ENCODE measurements at regions of chr11 and their contacts with region 1.

Region 1: GRCh38 chr11:10307442-10308207 is 2.8 kb downstream of the ADM start:
- DNase-seq: no peak
- H3K4me3 ChIP-seq: peak overlapping the region; percentile 100
- CTCF ChIP-seq: peak; percentile 83

Region 2: DNA sequence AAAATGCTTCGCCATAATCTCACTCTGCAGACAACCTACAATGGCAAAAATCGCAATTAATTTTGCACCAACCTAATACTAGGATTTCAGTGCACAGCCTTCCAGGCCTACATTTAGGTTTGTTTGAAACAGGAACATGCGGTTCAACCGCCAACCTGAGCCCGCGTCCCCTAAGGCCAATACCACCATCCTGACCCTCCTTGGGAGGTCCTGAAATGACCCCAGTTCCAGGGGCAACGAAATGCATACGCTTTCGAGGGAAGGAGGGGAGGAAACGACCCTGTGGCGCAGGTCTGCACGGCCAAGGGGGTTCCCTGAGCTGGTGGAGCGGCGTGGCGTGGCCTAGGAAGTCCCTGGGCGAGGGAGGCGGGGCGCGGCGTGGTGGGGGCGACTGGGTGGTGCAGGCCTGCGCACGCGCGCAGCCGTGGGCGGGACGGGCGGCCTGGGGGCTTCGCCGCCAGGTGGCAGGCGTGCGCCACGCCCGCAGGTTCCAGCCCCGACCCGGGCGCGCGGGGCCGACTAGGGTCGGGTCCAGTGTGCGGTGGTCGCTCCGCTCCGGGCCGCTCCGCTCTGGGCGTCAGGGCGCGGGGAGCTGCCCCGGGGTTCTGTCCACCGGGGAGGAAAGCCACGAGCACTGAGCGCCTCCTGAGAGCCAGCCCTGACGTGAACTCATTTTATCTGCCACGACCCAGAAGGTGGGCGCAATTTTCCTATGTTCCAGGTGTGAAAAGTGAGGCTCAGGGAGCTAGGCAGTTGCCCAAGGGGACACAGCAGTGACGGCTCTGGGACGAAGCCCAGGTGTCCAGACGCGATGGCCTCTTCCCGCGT is 549.6 kb before region 1 on chr11:
- CTCF ChIA-PET with region 1: interaction called, 8 read pairs
- POLR2A ChIA-PET with region 1: interaction called, 36 read pairs
- DNase-seq: no peak
- H3K4me3 ChIP-seq: peak overlapping the region; percentile 43
- CTCF ChIP-seq: peak; percentile 61

Region 3: GRCh38 chr11:9787981-9788521 is 519.6 kb before region 1 on chr11:
- CTCF ChIA-PET with region 1: no interaction called
- POLR2A ChIA-PET with region 1: interaction called, 10 read pairs
- DNase-seq: peak; percentile 55
- H3K4me3 ChIP-seq: no peak overlapping the region
- CTCF ChIP-seq: no peak

Region 4: GRCh38 chr11:9861860-9862725 is 445.5 kb before region 1 on chr11:
- CTCF ChIA-PET with region 1: interaction called, 7 read pairs
- POLR2A ChIA-PET with region 1: interaction called, 14 read pairs
- DNase-seq: peak; percentile 33
- H3K4me3 ChIP-seq: no peak overlapping the region
- CTCF ChIP-seq: peak; percentile 67

Region 5: DNA sequence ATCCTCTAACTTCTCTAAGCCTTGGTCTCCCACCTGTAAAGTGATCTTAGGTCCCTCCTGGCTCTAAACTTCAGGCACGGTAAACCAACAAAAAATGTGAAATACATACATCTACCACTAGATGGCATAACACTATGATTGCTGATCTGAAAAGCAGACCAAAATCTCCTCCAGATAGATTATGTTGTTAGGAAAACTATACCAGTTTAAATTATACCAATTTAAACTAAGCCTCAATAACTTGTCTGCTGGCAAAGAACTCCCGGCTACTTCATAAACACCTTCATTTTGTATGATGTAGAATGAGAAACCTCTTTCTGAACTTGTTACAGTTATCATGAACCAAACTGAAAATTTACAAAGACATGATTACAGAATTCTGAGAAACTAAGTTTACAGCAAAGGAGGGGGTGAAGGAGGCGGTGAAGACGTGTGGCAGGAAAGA is 99.5 kb before region 1 on chr11:
- CTCF ChIA-PET with region 1: interaction called, 33 read pairs
- POLR2A ChIA-PET with region 1: interaction called, 5 read pairs
- DNase-seq: no peak
- H3K4me3 ChIP-seq: no peak overlapping the region
- CTCF ChIP-seq: peak; percentile 49

Region 6: GRCh38 chr11:10322830-10323792 is 15.5 kb after region 1 on chr11:
- CTCF ChIA-PET with region 1: interaction called, 9 read pairs
- POLR2A ChIA-PET with region 1: interaction called, 34 read pairs
- DNase-seq: peak; percentile 67
- H3K4me3 ChIP-seq: no peak overlapping the region
- CTCF ChIP-seq: no peak

Region 7: GRCh38 chr11:10366568-10367370 is 59.1 kb after region 1 on chr11:
- CTCF ChIA-PET with region 1: interaction called, 38 read pairs
- POLR2A ChIA-PET with region 1: interaction called, 11 read pairs
- DNase-seq: peak; percentile 76
- H3K4me3 ChIP-seq: no peak overlapping the region
- CTCF ChIP-seq: peak; percentile 86

Region 8: GRCh38 chr11:10653926-10654810 is 346.5 kb after region 1 on chr11:
- CTCF ChIA-PET with region 1: no interaction called
- POLR2A ChIA-PET with region 1: no interaction called
- DNase-seq: no peak
- H3K4me3 ChIP-seq: no peak overlapping the region
- CTCF ChIP-seq: no peak

Measured in AG04449 (cell line).